ENCODE measurements at regions of chr6 and their contacts with region 1.

Region 1: GRCh38 chr6:106300944-106301343 is 24.6 kb downstream of the ATG5 start:
- DNase-seq: no peak
- H3K4me3 Mint-ChIP-seq: no peak overlapping the region
- H3K27ac Mint-ChIP-seq: no peak overlapping the region
- H3K4me1 Mint-ChIP-seq: peaks cover 15% of the 10 kb centered on the region
- H3K27me3 Mint-ChIP-seq: no peaks in the 10 kb centered on the region

Region 2: DNA sequence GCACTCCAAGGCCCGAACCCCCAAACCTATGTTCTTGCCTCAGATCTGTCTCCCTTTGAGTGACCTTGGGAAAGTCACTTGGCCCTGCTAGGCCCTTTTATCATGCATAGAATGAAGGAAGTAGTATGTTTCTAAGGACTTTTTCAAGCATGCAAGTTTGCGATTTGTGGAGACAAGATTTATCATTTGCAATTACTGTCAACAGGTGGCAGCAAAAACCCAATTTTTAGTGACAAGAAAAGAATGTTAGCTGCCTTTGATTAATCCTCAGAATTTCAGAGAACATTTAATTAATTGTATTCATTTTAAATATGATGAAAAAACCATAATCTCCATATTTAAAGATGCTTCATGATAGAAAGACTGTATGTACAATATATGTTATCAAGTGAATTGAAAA is 869.7 kb before region 1 on chr6:
- CTCF ChIA-PET with region 1: interaction called, 7 read pairs
- POLR2A ChIA-PET with region 1: no interaction called
- intact Hi-C with region 1: loop called (anchors 2 kb)
- DNase-seq: no peak
- H3K4me3 Mint-ChIP-seq: no peak overlapping the region
- H3K27ac Mint-ChIP-seq: no peak overlapping the region
- H3K4me1 Mint-ChIP-seq: no peaks in the 10 kb centered on the region
- H3K27me3 Mint-ChIP-seq: peaks cover 8% of the 10 kb centered on the region